ENCODE measurements at regions of chr22 and their contacts with region 1.

Region 1: GRCh38 chr22:26461188-26461810 is 22.3 kb downstream of the HPS4 start:
- DNase-seq: peak in 3 of 5 donors; percentile 17 to 22 (median 19)
- H3K4me3 ChIP-seq: no peak overlapping the region
- H3K4me3 Mint-ChIP-seq: no peak overlapping the region
- H3K27ac ChIP-seq: no peak overlapping the region
- H3K27ac Mint-ChIP-seq: peak overlapping the region in 1 of 7 donors; percentile 16
- H3K4me1 ChIP-seq: no peaks in the 10 kb centered on the region
- H3K4me1 Mint-ChIP-seq: peaks cover 0 to 5% (median 0%) of the 10 kb centered on the region in 4 donors
- H3K27me3 ChIP-seq: no peaks in the 10 kb centered on the region
- H3K27me3 Mint-ChIP-seq: no peaks in the 10 kb centered on the region

Region 2: GRCh38 chr22:26398741-26399153 is 62.6 kb before region 1 on chr22:
- CTCF ChIA-PET with region 1: interaction called, 51 read pairs
- POLR2A ChIA-PET with region 1: no interaction called
- intact Hi-C with region 1: no loop called
- DNase-seq: peak; percentile 36 to 56 (median 46)
- H3K4me3 ChIP-seq: no peak overlapping the region
- H3K4me3 Mint-ChIP-seq: no peak overlapping the region
- H3K27ac ChIP-seq: no peak overlapping the region
- H3K27ac Mint-ChIP-seq: no peak overlapping the region
- H3K4me1 ChIP-seq: no peaks in the 10 kb centered on the region
- H3K4me1 Mint-ChIP-seq: no peaks in the 10 kb centered on the region
- H3K27me3 ChIP-seq: no peaks in the 10 kb centered on the region
- H3K27me3 Mint-ChIP-seq: peaks cover 5 to 6% of the 10 kb centered on the region in 2 donors

Region 3: GRCh38 chr22:27124351-27124966 is 663.2 kb after region 1 on chr22:
- CTCF ChIA-PET with region 1: no interaction called
- POLR2A ChIA-PET with region 1: no interaction called
- intact Hi-C with region 1: no loop called
- DNase-seq: no peak
- H3K4me3 ChIP-seq: no peak overlapping the region
- H3K4me3 Mint-ChIP-seq: no peak overlapping the region
- H3K27ac ChIP-seq: no peak overlapping the region
- H3K27ac Mint-ChIP-seq: no peak overlapping the region
- H3K4me1 ChIP-seq: no peaks in the 10 kb centered on the region
- H3K4me1 Mint-ChIP-seq: no peaks in the 10 kb centered on the region
- H3K27me3 ChIP-seq: peaks cover 4% of the 10 kb centered on the region
- H3K27me3 Mint-ChIP-seq: peaks cover 7 to 12% of the 10 kb centered on the region in 2 donors